ENCODE measurements at regions of chr22 and their contacts with region 1.

Region 1: GRCh38 chr22:18077639-18078328 is at the start of gene PEX26:
- DNase-seq: peak; percentile 98
- H3K4me3 ChIP-seq: peak within 1 kb of the TSS; percentile 75 to 86
- H3K27ac ChIP-seq: peak within 1 kb of the TSS; percentile 5 to 65
- H3K4me1 ChIP-seq: peaks cover 20% of the 10 kb centered on the region
- H3K27me3 ChIP-seq: no peaks in the 10 kb centered on the region
- CTCF ChIP-seq: no peak
- POLR2A ChIP-seq: no peak
- total RNA-seq, gene PEX26: 29.1 to 33.4 TPM

Region 2: DNA sequence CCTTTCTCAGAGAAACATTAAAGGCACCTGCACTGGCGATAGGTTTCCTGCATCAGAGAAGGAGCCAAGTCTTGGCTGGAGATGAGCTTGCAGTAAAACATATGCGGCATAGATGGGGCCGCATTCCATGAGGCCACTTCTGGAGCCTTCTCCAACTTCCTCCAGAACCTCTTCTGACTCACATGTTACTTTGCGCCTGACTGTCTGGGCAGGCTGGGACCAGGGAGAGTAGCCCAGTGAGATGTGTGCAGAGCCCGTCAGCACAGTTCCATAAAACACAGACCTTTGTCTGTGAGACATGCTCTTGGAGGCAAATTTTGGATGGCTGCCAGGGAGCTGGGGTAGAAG is 248.1 kb before region 1 on chr22:
- intact Hi-C with region 1: loop called (anchors 5 kb)
- DNase-seq: no peak
- H3K4me3 ChIP-seq: no peak overlapping the region
- H3K27ac ChIP-seq: no peak overlapping the region
- H3K4me1 ChIP-seq: no peaks in the 10 kb centered on the region
- H3K27me3 ChIP-seq: no peaks in the 10 kb centered on the region
- CTCF ChIP-seq: no peak
- POLR2A ChIP-seq: no peak

Measured in testis (tissue), 5 donors.